HepG2 (cell line): ENCODE measurements at regions of chr6 and their contacts with region 1.

Region 1: GRCh38 chr6:37686111-37686510 is 11.6 kb downstream of the MDGA1 start:
- DNase-seq: no peak
- ATAC-seq: no peak
- H3K4me3 ChIP-seq: no peak overlapping the region
- H3K27ac ChIP-seq: no peak overlapping the region
- H3K4me1 ChIP-seq: no peaks in the 10 kb centered on the region
- H3K27me3 ChIP-seq: peaks cover 2 to 74% of the 10 kb centered on the region in 2 experiments; a peak in 4 of 5 replicates
- CTCF ChIP-seq: no peak
- EP300 ChIP-seq: no peak
- POLR2A ChIP-seq: no peak
- RAD21 ChIP-seq: no peak

Region 2: GRCh38 chr6:37324131-37325033 is 361.7 kb before region 1 on chr6:
- CTCF ChIA-PET with region 1: no interaction called
- POLR2A ChIA-PET with region 1: no interaction called
- in situ Hi-C with region 1: no loop called
- intact Hi-C with region 1: no loop called
- DNase-seq: no peak
- ATAC-seq: no peak
- H3K4me3 ChIP-seq: no peak overlapping the region
- H3K27ac ChIP-seq: peak overlapping the region; percentile 94
- H3K4me1 ChIP-seq: peaks cover 47% of the 10 kb centered on the region
- H3K27me3 ChIP-seq: no peaks in the 10 kb centered on the region
- CTCF ChIP-seq: no peak
- EP300 ChIP-seq: no peak
- POLR2A ChIP-seq: no peak
- RAD21 ChIP-seq: no peak

Region 3: GRCh38 chr6:37640786-37641395 is 45.2 kb before region 1 on chr6:
- CTCF ChIA-PET with region 1: no interaction called
- POLR2A ChIA-PET with region 1: no interaction called
- in situ Hi-C with region 1: no loop called
- intact Hi-C with region 1: loop called (anchors 2 kb)
- DNase-seq: no peak
- ATAC-seq: no peak
- H3K4me3 ChIP-seq: no peak overlapping the region
- H3K27ac ChIP-seq: no peak overlapping the region
- H3K4me1 ChIP-seq: no peaks in the 10 kb centered on the region
- H3K27me3 ChIP-seq: peaks cover 1 to 24% of the 10 kb centered on the region in 2 experiments; a peak in 4 of 5 replicates
- CTCF ChIP-seq: no peak
- EP300 ChIP-seq: no peak
- POLR2A ChIP-seq: no peak
- RAD21 ChIP-seq: no peak